HEK293 (cell line): ENCODE measurements at regions of chr4 and their contacts with region 1.

Region 1: DNA sequence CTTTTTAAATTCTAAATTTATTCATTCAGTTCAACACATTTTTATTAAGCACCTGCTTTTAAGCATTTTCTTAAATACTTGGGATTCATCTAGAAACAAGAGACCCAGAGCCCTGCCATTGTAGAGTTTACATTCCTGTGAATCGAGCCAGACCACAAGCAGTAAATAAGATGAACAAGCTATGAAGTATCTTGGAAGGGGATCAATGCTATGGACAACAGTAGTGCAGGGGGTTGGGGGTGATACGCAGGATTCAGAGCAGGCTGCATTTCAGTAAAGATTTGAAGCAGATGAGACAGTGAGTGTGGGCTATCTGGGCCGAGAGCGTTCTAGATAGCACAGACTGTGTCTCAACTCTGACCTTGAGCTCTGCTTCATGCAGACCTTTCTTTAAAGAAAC is 35.1 kb downstream of the CLDN22 start:
- H3K4me3 ChIP-seq: no peak overlapping the region
- H3K27ac ChIP-seq: no peak overlapping the region
- H3K4me1 ChIP-seq: no peaks in the 10 kb centered on the region
- CTCF ChIP-seq: no peak

Region 2: DNA sequence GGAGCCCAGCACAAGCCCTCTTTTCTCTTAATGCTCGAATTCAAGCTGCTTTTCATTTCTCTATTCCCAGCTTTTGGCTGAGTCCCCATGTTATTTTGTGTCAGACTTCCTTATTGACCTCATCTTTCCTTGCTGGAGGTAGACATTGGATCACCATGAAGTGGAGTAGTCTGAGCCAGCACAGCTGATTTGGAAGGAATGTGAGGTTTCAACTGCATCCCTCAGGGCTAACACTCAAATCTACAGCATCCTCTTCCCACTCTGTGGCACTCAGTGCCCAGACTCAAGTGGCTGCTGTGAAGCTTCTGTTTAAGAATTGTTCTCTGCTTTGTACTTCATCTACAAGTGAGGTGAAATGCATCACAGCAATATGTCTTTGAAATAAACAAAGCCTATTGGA is 380.5 kb after region 1 on chr4:
- CTCF ChIA-PET with region 1: no interaction called
- POLR2A ChIA-PET with region 1: interaction called, 11 read pairs
- H3K4me3 ChIP-seq: no peak overlapping the region
- H3K27ac ChIP-seq: no peak overlapping the region
- H3K4me1 ChIP-seq: no peaks in the 10 kb centered on the region
- CTCF ChIP-seq: no peak